AG04449 (cell line): ENCODE measurements at regions of chr1 and their contacts with region 1.

Region 1: DNA sequence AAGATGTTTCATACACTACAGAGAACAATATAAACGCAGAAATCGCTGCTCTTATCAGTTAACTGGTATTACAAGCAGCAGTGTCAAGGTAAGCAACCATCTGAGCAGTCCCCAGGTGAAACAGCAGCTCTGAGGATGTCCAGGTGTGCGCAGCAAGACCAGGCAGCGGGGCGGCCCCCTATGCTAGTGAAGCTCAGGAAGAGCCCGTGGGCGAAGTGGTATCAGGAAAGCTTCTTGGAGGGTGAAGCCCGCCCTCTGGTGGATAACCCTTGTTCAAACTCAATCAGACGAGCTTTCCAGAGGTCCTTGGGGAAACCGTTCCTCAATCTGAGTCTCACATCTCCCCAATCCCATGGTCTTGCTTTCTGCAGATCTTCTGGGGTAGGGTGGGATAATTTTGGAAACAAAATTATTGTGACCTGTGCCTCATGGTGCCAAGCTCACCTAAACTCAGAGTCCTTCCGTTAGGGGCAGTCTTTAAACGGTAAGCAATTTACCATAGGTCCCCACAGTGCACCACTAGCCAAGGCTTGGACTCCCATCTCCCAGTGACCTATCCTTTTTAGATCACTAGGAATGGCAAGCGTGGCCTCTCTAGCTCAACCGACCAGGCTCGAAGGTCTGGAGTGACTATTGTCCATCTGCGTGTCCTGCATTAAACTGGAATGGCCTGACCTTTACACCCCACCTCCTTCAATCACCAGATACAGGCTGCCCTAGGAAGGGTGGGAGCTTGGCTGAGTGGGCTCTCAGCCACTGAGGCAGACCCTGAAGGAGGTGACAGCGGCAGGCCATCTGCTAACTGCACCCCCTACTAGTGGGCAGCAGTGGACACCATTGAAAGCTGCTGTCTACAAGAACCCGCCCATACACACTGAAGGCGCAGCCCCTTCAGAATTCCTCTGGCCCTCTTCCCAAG is 13.6 kb upstream of the FAM110D start:
- DNase-seq: no peak
- H3K4me3 ChIP-seq: no peak overlapping the region
- CTCF ChIP-seq: peak; percentile 76

Region 2: DNA sequence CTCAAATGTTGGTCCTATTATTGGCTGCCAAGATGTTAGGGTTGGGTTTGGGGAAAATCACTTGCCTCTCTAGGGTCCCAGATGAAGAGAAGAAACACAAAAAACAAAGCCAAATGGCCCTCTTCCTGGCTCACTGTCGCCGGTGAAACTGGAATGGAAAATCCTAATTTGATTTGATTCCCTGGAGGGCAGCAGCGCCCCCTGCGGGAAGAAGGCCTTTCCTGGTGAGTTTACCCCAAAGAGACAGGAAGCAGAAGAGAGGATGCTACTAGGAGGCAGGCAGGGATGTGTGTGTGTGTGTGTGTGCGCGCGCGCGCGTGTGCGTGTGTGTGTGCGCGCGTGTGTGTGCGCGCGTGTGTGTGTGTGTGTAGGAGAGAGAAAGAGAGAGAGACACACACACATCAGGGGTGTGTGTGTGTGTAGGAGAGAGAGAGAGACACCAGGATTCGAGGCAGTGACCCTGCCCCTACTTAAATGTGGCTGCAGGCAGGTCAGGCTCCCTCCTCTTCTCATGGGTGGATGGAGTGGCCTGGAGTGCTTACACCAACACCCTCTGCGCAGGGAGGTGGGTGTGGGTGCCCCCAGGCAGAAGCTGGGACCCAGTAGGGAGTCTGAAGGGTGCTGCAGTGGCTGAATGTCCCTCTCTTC is 348.4 kb before region 1 on chr1:
- CTCF ChIA-PET with region 1: no interaction called
- POLR2A ChIA-PET with region 1: no interaction called
- DNase-seq: no peak
- H3K4me3 ChIP-seq: no peak overlapping the region
- CTCF ChIP-seq: peak; percentile 87

Region 3: DNA sequence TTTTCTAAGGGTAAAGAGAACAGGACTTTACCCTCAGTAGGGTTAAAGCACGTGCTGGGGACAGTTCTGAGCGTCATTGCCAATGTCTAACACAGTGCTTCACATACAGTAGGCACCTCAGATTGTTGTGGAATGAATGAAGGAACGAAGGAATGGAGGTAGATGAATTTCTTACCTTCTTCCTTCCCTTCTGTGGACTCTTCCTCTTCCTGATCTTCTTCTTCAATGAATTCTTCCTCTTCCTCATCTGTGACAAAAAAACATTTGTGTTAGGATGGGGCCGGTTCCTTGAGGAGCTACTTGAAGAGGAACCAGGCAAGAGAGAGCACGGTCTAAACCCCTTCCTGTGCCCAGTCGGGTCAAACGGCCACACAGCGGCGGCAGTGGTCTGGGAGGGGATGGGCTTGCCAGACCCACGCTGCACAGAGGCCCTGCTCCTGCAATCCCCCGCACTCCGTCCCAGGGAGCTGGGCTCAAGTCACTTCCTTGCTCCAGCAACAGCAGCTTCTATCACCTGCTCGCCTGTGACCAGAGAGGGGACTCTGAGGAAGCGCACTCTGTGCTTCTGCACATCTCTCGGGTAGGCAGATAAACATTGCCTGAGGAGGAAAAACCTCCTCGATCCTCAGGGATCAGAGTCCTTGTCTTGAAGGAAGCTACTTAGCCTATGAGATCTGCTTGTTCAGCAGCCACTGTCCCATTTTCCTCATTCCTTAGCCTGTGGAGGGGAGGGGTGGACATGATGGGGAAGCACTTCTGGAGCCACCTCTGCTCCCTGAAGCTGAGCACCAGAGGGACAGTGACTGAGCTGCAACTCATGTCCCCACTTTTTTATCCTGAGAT is 91.4 kb before region 1 on chr1:
- CTCF ChIA-PET with region 1: interaction called, 10 read pairs
- POLR2A ChIA-PET with region 1: no interaction called
- DNase-seq: no peak
- H3K4me3 ChIP-seq: no peak overlapping the region
- CTCF ChIP-seq: no peak

Region 4: DNA sequence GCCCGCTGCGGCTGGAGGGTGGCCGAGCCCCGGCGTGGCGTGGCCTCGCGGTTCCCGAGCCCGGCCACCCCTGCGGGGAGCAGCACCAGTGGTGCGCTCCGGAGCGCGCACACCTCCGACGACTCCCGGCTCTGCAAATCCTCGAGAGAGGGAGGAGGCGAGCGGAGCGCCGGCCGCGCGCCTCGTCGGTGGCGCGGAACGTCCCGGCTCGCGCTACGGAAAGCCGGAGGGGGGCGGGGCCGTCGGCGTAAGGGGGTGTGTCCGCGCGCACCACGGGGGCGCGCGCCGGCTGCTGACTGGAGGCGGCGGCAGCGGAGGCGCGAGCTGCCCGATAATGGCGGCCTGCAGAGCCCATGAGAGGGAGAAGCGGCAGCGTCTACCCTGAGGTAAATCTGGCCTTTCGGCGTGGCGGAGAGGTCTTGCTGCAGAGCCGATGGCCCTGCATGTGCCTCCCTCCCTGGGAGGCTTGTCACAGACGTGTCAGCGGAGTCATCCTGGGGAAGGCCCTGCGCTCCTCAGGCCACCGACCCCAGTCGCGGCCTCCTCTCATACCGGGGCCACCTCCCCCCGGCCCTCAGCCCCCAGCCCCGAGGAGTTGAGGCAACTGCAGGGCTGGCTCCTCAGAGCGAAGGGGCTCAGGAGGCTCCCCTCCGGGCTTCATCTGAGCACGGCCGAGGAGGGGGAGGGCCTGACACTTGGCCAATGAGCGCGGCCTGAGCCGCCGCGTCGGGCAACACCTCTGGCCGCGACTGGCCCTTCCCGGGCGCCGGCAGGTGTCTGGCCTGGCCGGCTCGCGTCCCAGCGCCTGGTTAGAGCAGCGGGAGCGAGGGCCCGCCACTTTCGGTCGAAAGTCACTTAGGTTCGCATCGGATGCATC is 33.5 kb before region 1 on chr1 and contains the start of gene PDIK1L:
- CTCF ChIA-PET with region 1: interaction called, 360 read pairs
- POLR2A ChIA-PET with region 1: no interaction called
- DNase-seq: peak; percentile 59
- H3K4me3 ChIP-seq: peak within 1 kb of the TSS; percentile 97
- CTCF ChIP-seq: no peak

Region 5: GRCh38 chr1:26132128-26132833 is 13.0 kb before region 1 on chr1:
- CTCF ChIA-PET with region 1: interaction called, 150 read pairs
- POLR2A ChIA-PET with region 1: no interaction called
- DNase-seq: no peak
- H3K4me3 ChIP-seq: no peak overlapping the region
- CTCF ChIP-seq: no peak